Calu3 (cell line): ENCODE measurements at regions of chr1 and their contacts with region 1.

Region 1: DNA sequence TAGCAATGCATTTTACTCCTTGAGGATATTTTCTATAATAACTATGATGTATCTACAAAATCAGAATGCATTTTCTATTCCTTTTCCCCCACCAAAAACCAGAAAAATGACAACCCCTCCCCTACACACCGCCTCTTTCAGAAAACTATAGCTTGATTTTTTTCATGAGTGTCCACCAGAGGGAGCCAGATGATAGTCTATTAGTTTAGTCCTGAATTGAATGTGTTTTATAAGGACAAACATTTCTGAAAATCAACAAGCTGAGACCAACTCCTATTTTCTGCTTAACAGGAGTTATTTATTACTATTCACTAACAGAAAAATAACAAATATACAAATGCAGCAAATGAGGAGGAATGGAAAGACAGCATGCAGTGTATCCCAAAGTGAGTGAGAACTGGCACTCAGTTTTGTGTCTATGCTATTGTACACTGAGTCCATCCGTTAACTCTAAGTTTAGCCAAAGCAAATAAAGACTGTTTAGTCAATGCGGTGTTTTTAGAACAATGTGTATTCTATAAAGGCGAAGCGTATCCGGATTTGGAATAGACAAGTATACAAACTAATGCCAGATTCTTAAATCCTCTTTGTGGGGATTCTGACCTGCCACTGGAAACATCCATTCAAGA is 182.6 kb downstream of the VAV3 start:
- DNase-seq: peak; percentile 38
- H3K4me3 Mint-ChIP-seq: no peak overlapping the region
- H3K27ac Mint-ChIP-seq: no peak overlapping the region
- H3K4me1 Mint-ChIP-seq: peaks cover 1% of the 10 kb centered on the region
- H3K27me3 Mint-ChIP-seq: peaks cover 11% of the 10 kb centered on the region
- CTCF ChIP-seq: peak; percentile 33

Region 2: GRCh38 chr1:108009603-108010195 is 227.4 kb after region 1 on chr1:
- CTCF ChIA-PET with region 1: no interaction called
- intact Hi-C with region 1: no loop called
- DNase-seq: no peak
- H3K4me3 Mint-ChIP-seq: no peak overlapping the region
- H3K27ac Mint-ChIP-seq: no peak overlapping the region
- H3K4me1 Mint-ChIP-seq: no peaks in the 10 kb centered on the region
- H3K27me3 Mint-ChIP-seq: peaks cover 46% of the 10 kb centered on the region
- CTCF ChIP-seq: no peak

Region 3: GRCh38 chr1:108118018-108118902 is 335.9 kb after region 1 on chr1:
- CTCF ChIA-PET with region 1: interaction called, 12 read pairs
- intact Hi-C with region 1: no loop called
- DNase-seq: no peak
- H3K4me3 Mint-ChIP-seq: no peak overlapping the region
- H3K27ac Mint-ChIP-seq: no peak overlapping the region
- H3K4me1 Mint-ChIP-seq: no peaks in the 10 kb centered on the region
- H3K27me3 Mint-ChIP-seq: peaks cover 61% of the 10 kb centered on the region
- CTCF ChIP-seq: no peak

Region 4: GRCh38 chr1:108125312-108126138 is 343.2 kb after region 1 on chr1:
- CTCF ChIA-PET with region 1: interaction called, 28 read pairs
- intact Hi-C with region 1: loop called (anchors 1 kb)
- DNase-seq: peak; percentile 45
- H3K4me3 Mint-ChIP-seq: no peak overlapping the region
- H3K27ac Mint-ChIP-seq: no peak overlapping the region
- H3K4me1 Mint-ChIP-seq: no peaks in the 10 kb centered on the region
- H3K27me3 Mint-ChIP-seq: peaks cover 29% of the 10 kb centered on the region
- CTCF ChIP-seq: peak; percentile 80